Transverse colon (tissue), 4 donors: ENCODE measurements at regions of chr15 and their contacts with region 1.

Region 1: DNA sequence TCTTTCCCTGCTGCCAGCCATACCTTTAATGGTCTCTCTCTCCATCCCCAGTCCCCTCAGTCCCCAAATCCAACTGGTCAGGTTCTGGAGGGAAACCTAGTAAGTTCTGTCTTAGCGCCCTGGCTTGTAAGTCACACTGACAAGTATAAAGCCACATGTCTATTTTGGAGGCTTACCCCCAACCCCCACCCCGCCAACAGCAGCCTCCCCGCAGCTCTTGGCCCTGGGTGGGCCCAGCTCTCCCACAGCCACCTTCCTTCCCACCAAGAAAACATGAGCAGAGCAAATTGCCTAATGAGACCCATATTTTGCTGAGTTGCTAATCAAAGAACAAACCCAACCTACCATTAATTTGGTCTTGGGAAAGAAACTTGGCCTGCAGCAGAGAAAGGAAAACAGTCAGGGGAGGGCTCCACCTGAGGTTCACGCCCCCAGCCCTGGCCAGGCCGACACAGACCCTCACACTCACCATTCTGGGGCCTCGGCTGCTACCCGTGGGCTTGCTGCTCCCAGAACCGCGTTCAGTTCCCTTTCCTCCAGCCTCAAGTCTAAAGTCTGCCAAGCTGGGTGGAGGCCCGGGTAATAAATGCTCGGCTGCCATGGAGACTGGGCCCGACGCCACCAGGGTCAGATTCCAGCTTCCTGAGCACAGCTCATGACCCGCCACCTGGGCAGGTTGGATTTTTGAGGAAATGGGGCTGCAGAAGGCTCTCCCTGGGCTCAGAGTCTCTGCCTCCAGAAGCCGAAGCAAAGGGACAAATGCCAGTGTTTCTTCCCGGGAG is at the start of gene CALML4:
- DNase-seq: peak; percentile 93
- H3K4me3 ChIP-seq: peak within 1 kb of the TSS; percentile 8 to 61 (median 40)
- H3K27ac ChIP-seq: peak within 1 kb of the TSS; percentile 87 to 90 (median 90)
- H3K4me1 ChIP-seq: peaks cover 12 to 65% (median 46%) of the 10 kb centered on the region in 4 donors
- H3K27me3 ChIP-seq: no peaks in the 10 kb centered on the region
- CTCF ChIP-seq: no peak
- EP300 ChIP-seq: no peak
- POLR2A ChIP-seq: peak; percentile 76
- total RNA-seq, gene CALML4: 56.3 to 153 (median 75.2) TPM

Region 2: GRCh38 chr15:66524838-66525237 is 1680.1 kb before region 1 on chr15:
- in situ Hi-C with region 1: no loop called
- intact Hi-C with region 1: loop called (anchors 5 kb)
- DNase-seq: no peak
- H3K4me3 ChIP-seq: no peak overlapping the region
- H3K27ac ChIP-seq: no peak overlapping the region
- H3K4me1 ChIP-seq: no peaks in the 10 kb centered on the region
- H3K27me3 ChIP-seq: no peaks in the 10 kb centered on the region
- CTCF ChIP-seq: no peak
- EP300 ChIP-seq: no peak
- POLR2A ChIP-seq: no peak

Region 3: DNA sequence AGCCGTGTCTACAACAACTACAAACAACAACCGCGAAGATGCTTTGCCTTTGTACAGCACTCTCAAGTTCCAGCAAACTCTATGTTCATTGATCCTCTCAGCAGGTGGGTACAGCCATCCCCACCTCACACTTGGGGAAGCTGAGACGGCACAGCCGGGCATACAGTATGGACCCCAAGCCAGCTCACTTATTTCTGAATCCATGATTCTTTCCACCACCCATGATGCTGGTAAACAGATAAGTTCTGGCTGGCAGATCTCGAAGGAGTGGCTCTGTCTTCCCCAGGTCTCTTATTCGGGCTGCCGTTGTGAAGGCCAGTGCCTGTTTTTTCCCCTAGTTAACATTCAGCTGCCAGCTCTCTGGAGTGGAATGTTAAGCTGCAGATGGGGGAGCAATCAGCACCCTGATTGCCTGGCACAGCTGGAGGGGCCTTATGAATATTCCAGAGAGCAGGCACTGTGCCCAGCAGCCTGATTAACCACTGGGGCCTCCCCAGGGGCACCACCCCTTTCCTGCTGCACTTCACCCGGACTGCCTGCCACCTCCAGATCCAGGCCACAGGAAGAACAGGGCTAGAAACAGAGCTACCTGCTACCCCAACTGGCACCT is 447.1 kb after region 1 on chr15:
- in situ Hi-C with region 1: no loop called
- intact Hi-C with region 1: no loop called
- DNase-seq: no peak
- H3K4me3 ChIP-seq: no peak overlapping the region
- H3K27ac ChIP-seq: no peak overlapping the region
- H3K4me1 ChIP-seq: no peaks in the 10 kb centered on the region
- H3K27me3 ChIP-seq: no peaks in the 10 kb centered on the region
- CTCF ChIP-seq: no peak
- EP300 ChIP-seq: no peak
- POLR2A ChIP-seq: no peak